Heart left ventricle (tissue), 16 donors: ENCODE measurements at regions of chr12 and their contacts with region 1.

Region 1: GRCh38 chr12:3202734-3203446 is 125.7 kb downstream of the TSPAN9 start:
- DNase-seq: peak in 3 of 5 donors; percentile 67 to 77 (median 67)
- ATAC-seq: peak in 3 of 4 donors; percentile 19 to 62 (median 34)
- H3K4me3 ChIP-seq: peak overlapping the region in 10 of 12 donors; percentile 22 to 86 (median 68)
- H3K27ac ChIP-seq: peak overlapping the region; percentile 63 to 97 (median 86)
- H3K4me1 ChIP-seq: peaks cover 0 to 92% (median 48%) of the 10 kb centered on the region in 12 donors
- H3K27me3 ChIP-seq: peaks cover 0 to 33% (median 0%) of the 10 kb centered on the region in 9 donors
- CTCF ChIP-seq: peak; percentile 83 to 96 (median 88)
- POLR2A ChIP-seq: no peak

Region 2: DNA sequence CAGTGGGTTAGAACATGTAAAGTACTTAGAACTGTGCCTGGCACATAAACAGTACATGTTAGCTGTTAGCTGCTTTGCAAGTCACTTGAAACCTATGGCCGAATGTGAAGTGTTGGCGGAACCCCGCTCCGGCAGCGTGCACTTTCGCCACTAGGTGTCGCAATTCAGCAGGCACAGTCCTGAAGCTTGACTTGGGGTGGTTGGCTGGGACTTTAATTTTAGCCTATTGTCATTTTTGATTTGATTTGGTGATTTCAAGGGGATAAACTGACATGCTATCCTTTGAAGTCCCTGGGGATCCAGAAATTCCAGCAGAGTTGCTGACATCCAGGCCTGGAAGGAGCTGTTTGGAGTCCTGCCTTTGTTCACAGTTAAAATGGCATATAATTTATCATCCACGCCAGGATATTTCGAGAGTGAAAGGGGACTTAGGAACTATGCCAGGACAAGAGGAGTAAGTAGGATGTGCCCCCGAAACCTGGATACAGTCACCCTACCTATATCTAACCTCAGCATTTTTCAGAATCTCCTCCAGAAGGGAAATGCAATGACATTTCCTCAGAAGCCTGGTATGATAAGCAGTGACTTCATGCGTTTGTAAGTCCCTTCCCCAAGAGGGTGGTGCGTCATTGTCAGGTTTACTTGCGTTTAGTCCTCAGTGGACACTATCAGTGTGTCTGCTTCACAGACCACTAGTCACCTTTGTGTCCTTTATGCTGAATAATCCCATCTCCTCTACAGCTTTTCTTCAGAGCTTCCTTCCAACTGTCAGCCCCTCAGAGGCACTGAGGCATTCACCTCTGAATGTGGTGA is 129.2 kb before region 1 on chr12:
- intact Hi-C with region 1: loop called in 9 of 10 experiments (anchors 1 to 10 kb)
- DNase-seq: peak; percentile 80 to 89 (median 85)
- ATAC-seq: peak in 3 of 4 donors; percentile 21 to 58 (median 43)
- H3K4me3 ChIP-seq: no peak overlapping the region
- H3K27ac ChIP-seq: peak overlapping the region in 7 of 12 donors; percentile 3 to 64 (median 32)
- H3K4me1 ChIP-seq: peaks cover 0 to 48% (median 25%) of the 10 kb centered on the region in 12 donors
- H3K27me3 ChIP-seq: peaks cover 0 to 13% (median 0%) of the 10 kb centered on the region in 9 donors
- CTCF ChIP-seq: peak; percentile 96 to 100 (median 99)
- POLR2A ChIP-seq: no peak

Region 3: GRCh38 chr12:3135522-3136461 is 67.1 kb before region 1 on chr12:
- intact Hi-C with region 1: loop called (anchors 1 to 5 kb)
- DNase-seq: peak in 2 of 5 donors; percentile 37 to 52
- ATAC-seq: peak; percentile 6 to 44 (median 26)
- H3K4me3 ChIP-seq: no peak overlapping the region
- H3K27ac ChIP-seq: peak overlapping the region in 3 of 12 donors; percentile 28 to 80 (median 36)
- H3K4me1 ChIP-seq: peaks cover 13 to 98% (median 76%) of the 10 kb centered on the region in 12 donors
- H3K27me3 ChIP-seq: no peaks in the 10 kb centered on the region
- CTCF ChIP-seq: peak; percentile 70 to 88 (median 81)
- POLR2A ChIP-seq: no peak

Region 4: DNA sequence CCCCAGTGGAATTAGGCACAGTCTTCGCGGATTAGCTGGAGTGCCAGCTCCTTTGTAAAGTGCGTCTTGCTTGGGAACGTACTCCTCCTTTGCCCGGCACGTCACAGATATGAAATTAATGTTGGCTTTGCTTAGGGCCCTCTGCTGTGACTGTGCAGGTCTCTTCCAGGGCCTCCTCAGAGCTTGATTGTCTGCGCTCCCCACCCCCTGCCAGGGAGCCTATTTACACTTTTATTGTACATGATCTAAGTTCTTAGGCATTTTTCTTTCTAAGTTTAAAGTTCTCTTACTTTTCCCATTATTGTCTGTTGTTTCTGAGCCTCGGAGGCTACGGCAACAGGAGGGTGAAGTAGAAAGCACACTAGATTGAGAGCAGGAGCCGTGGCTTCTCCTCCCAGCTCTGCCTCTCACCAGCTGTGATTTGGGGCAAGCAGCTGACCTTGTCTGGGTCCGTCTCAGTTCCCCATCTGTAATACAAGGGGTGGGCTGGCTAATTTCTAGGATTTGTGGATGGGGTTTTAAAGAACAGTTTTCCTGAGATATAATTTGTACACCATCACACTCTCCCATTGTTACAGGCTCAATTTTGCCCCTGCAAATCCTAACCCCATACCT is 43.9 kb before region 1 on chr12:
- intact Hi-C with region 1: loop called in 1 of 10 experiments (anchors 5 kb)
- DNase-seq: peak in 1 of 5 donors; percentile 37
- ATAC-seq: peak; percentile 22 to 60 (median 38)
- H3K4me3 ChIP-seq: no peak overlapping the region
- H3K27ac ChIP-seq: peak overlapping the region in 7 of 12 donors; percentile 15 to 68 (median 40)
- H3K4me1 ChIP-seq: peaks cover 0 to 46% (median 24%) of the 10 kb centered on the region in 12 donors
- H3K27me3 ChIP-seq: no peaks in the 10 kb centered on the region
- CTCF ChIP-seq: no peak
- POLR2A ChIP-seq: no peak

Region 5: DNA sequence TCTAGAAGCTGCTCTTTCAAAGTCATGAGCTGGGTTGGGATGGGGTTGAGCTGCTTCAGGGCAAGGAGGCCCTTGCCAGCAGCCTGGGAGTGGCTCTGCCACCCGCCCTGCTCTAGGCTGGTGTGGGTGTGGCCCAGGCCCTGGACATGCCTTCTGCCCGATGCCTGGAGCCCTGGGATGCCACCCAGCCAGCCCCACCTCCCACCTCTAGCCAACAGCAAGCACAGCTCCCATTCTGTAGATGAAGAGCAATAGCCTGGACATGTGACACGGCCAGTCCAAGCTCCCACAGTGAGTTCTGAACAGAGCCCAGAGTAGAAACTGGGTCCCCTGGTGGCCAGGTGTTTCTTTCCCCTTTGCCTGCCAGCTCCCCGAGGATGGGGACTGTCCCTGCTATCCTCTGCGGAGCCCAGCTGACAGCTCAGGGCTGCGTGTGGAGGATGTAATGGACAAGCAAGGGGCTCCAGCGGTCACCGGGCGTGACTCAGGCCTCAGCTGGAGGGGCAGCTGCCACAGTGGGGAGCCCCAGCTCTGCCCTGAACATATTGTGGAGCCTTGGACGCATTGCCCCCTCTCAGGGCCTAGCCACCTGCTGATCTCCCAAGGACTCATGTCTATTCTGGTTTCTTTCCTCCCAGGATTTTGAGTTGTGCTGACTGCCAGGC is 39.4 kb after region 1 on chr12:
- intact Hi-C with region 1: loop called in 1 of 10 experiments (anchors 5 kb)
- DNase-seq: peak; percentile 80 to 92 (median 85)
- ATAC-seq: peak; percentile 74 to 89 (median 84)
- H3K4me3 ChIP-seq: no peak overlapping the region
- H3K27ac ChIP-seq: peak overlapping the region; percentile 75 to 100 (median 92)
- H3K4me1 ChIP-seq: peaks cover 3 to 99% (median 73%) of the 10 kb centered on the region in 12 donors
- H3K27me3 ChIP-seq: no peaks in the 10 kb centered on the region
- CTCF ChIP-seq: peak in 2 of 12 donors; percentile 5 to 9
- POLR2A ChIP-seq: peak in 1 of 2 donors; percentile 30

Region 6: GRCh38 chr12:3252450-3252891 is 49.6 kb after region 1 on chr12:
- intact Hi-C with region 1: loop called in 4 of 10 experiments (anchors 5 kb)
- DNase-seq: peak; percentile 89 to 96 (median 92)
- ATAC-seq: peak; percentile 40 to 60 (median 52)
- H3K4me3 ChIP-seq: no peak overlapping the region
- H3K27ac ChIP-seq: peak overlapping the region; percentile 84 to 100 (median 94)
- H3K4me1 ChIP-seq: peaks cover 12 to 97% (median 88%) of the 10 kb centered on the region in 12 donors
- H3K27me3 ChIP-seq: no peaks in the 10 kb centered on the region
- CTCF ChIP-seq: no peak
- POLR2A ChIP-seq: peak in 1 of 2 donors; percentile 38

Region 7: GRCh38 chr12:3275171-3276041 is 72.5 kb after region 1 on chr12:
- intact Hi-C with region 1: loop called in 9 of 10 experiments (anchors 2 to 10 kb)
- DNase-seq: peak; percentile 69 to 88 (median 78)
- ATAC-seq: peak; percentile 42 to 63 (median 51)
- H3K4me3 ChIP-seq: no peak overlapping the region
- H3K27ac ChIP-seq: peak overlapping the region in 10 of 12 donors; percentile 49 to 85 (median 68)
- H3K4me1 ChIP-seq: peaks cover 7 to 100% (median 42%) of the 10 kb centered on the region in 12 donors
- H3K27me3 ChIP-seq: no peaks in the 10 kb centered on the region
- CTCF ChIP-seq: peak; percentile 95 to 100 (median 99)
- POLR2A ChIP-seq: no peak